ENCODE measurements at regions of chr14 and their contacts with region 1.

Region 1: GRCh38 chr14:76647697-76648298 is 113.5 kb upstream of the VASH1 start:
- DNase-seq: peak; percentile 22
- H3K4me3 Mint-ChIP-seq: no peak overlapping the region
- H3K27ac Mint-ChIP-seq: no peak overlapping the region
- H3K4me1 Mint-ChIP-seq: no peaks in the 10 kb centered on the region
- H3K27me3 Mint-ChIP-seq: peaks cover 5% of the 10 kb centered on the region

Region 2: DNA sequence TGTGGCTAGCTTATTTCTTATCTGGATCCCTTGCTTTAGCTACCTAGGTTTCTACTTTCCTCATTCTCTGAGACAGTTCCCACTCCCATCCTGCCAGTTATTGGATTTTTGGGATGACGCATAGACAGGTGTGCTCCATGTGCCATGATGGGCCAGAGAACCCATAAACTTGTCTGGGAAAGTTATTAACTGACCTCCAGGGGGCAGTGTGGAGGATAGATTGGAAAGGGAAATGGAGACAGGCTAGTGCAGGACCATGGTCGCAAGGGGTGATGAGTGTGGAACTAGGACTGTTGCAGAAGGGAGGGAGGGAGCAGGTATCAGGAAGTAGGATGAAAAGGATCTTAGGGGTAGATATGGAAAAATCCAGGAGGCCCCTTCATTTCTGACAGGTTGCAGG is 191.6 kb before region 1 on chr14:
- CTCF ChIA-PET with region 1: interaction called, 5 read pairs
- POLR2A ChIA-PET with region 1: no interaction called
- intact Hi-C with region 1: loop called (anchors 1 kb)
- DNase-seq: peak; percentile 31
- H3K4me3 Mint-ChIP-seq: no peak overlapping the region
- H3K27ac Mint-ChIP-seq: no peak overlapping the region
- H3K4me1 Mint-ChIP-seq: no peaks in the 10 kb centered on the region
- H3K27me3 Mint-ChIP-seq: peaks cover 4% of the 10 kb centered on the region